ENCODE measurements at regions of chr20 and their contacts with region 1.

Region 1: DNA sequence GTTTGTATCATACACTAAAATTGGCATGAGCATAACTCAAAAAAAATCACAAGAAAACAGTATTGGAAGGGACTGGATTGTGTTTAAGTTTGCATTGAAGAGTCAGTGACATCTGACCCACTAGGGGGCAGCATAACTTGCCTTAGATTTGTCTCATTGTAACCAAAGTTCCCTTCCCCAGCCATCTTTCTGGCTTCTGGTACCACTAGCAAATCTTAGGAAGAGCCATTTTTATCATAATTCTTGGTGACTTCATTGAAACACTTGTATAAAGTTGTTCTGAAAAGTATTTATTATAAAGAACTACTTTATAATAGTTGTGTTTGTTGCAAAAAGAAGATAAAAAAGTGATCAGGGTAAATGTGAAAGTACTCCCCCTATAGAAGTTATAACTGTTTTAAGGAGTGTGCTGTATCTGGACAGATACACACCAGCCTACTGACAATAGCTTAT is 7.7 kb downstream of the CSTF1 start:
- DNase-seq: peak; percentile 33
- ATAC-seq: peak; percentile 79
- H3K4me3 ChIP-seq: no peak overlapping the region
- H3K27ac ChIP-seq: no peak overlapping the region
- H3K4me1 ChIP-seq: no peaks in the 10 kb centered on the region
- H3K27me3 ChIP-seq: no peaks in the 10 kb centered on the region
- CTCF ChIP-seq: peak; percentile 79; the same call in 1 of the 2 replicates

Region 2: DNA sequence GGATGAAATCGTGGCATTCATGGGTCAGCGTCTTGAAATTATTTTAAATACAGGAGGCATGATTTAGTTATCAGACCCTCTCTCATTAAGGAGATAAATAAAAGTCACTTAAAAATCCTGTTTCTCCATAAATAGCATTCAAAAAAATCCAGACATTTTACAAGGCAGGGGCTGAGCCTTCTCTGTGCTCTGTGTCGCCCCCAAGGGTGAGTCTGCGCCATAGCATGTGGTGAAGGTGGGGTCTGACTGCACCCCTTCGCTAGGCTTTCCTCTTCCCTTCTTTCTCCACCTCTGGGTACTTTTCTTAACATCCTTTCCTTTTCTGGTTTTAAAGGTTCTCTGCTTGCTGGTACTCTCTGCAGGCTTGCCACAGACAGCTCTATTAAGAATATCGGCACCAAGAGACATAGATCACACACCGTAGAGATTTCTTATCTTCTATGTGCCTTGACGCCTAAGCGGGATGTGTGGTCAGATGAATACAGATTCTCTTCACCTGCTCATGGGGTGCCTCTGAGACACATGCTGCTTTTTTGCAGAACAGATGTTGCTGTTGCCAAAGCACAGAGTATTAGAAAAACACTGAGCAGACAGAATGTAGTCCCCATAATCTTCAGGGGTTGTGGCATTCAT is 104.4 kb after region 1 on chr20:
- CTCF ChIA-PET with region 1: interaction called, 10 read pairs
- POLR2A ChIA-PET with region 1: no interaction called
- in situ Hi-C with region 1: no loop called
- intact Hi-C with region 1: no loop called
- DNase-seq: peak; percentile 2
- ATAC-seq: no peak
- H3K4me3 ChIP-seq: no peak overlapping the region
- H3K27ac ChIP-seq: no peak overlapping the region
- H3K4me1 ChIP-seq: no peaks in the 10 kb centered on the region
- H3K27me3 ChIP-seq: no peaks in the 10 kb centered on the region
- CTCF ChIP-seq: peak; percentile 73

Region 3: GRCh38 chr20:56574531-56575142 is 174.5 kb after region 1 on chr20:
- CTCF ChIA-PET with region 1: no interaction called
- POLR2A ChIA-PET with region 1: no interaction called
- in situ Hi-C with region 1: no loop called
- intact Hi-C with region 1: loop called (anchors 10 kb)
- DNase-seq: no peak
- ATAC-seq: no peak
- H3K4me3 ChIP-seq: no peak overlapping the region
- H3K27ac ChIP-seq: no peak overlapping the region
- H3K4me1 ChIP-seq: no peaks in the 10 kb centered on the region
- H3K27me3 ChIP-seq: no peaks in the 10 kb centered on the region
- CTCF ChIP-seq: no peak